Posterior vena cava (tissue), 2 donors: ENCODE measurements at regions of chr15 and their contacts with region 1.

Region 1: DNA sequence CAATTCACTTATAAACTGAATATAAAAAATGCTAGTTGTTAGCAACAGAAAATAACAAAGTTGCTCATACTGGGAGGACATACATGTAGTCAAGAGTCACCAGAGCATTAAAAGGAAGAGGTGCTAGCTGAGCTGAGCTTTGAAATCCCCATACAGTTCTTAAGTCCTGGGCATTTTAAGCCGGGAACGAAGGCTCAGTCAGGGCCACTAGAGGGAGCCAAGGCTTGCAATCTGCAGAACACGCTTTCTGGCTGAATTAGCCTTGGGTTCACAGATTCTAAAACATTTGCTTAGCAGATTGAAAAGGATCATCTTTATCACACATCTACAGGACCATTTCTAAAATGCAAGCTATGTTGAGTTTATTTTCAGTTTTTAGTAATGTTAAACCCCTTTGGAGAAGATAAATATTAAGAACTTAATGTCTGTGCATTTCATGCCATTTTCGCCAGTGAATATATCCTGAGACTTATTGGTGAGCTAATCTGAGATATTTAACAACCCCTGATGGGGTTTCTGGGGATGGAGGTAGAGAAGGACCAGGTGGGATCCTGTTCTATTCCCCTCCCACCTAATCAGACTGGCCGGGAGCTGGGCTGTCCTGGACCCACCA is 26.3 kb upstream of the MNS1 start:
- DNase-seq: no peak

Region 2: GRCh38 chr15:56821721-56822425 is 330.7 kb after region 1 on chr15:
- intact Hi-C with region 1: loop called in 1 of 2 experiments (anchors 10 kb)
- DNase-seq: no peak

Region 3: GRCh38 chr15:56869573-56869972 is 378.4 kb after region 1 on chr15:
- intact Hi-C with region 1: loop called in 1 of 2 experiments (anchors 10 kb)
- DNase-seq: peak; percentile 85

Region 4: GRCh38 chr15:56886932-56887781 is 395.9 kb after region 1 on chr15:
- intact Hi-C with region 1: loop called in 1 of 2 experiments (anchors 10 kb)
- DNase-seq: peak; percentile 98

Region 5: GRCh38 chr15:57213862-57214261 is 722.6 kb after region 1 on chr15:
- intact Hi-C with region 1: loop called in 1 of 2 experiments (anchors 10 kb)
- DNase-seq: no peak

Region 6: GRCh38 chr15:57306161-57306943 is 815.1 kb after region 1 on chr15:
- intact Hi-C with region 1: loop called in 1 of 2 experiments (anchors 2 kb)
- DNase-seq: peak; percentile 95

Region 7: GRCh38 chr15:57861036-57861638 is 1369.9 kb after region 1 on chr15:
- intact Hi-C with region 1: loop called in 1 of 2 experiments (anchors 5 kb)
- DNase-seq: no peak